CD8-positive, alpha-beta T cell (primary cell): ENCODE measurements at regions of chr22 and their contacts with region 1.

Region 1: DNA sequence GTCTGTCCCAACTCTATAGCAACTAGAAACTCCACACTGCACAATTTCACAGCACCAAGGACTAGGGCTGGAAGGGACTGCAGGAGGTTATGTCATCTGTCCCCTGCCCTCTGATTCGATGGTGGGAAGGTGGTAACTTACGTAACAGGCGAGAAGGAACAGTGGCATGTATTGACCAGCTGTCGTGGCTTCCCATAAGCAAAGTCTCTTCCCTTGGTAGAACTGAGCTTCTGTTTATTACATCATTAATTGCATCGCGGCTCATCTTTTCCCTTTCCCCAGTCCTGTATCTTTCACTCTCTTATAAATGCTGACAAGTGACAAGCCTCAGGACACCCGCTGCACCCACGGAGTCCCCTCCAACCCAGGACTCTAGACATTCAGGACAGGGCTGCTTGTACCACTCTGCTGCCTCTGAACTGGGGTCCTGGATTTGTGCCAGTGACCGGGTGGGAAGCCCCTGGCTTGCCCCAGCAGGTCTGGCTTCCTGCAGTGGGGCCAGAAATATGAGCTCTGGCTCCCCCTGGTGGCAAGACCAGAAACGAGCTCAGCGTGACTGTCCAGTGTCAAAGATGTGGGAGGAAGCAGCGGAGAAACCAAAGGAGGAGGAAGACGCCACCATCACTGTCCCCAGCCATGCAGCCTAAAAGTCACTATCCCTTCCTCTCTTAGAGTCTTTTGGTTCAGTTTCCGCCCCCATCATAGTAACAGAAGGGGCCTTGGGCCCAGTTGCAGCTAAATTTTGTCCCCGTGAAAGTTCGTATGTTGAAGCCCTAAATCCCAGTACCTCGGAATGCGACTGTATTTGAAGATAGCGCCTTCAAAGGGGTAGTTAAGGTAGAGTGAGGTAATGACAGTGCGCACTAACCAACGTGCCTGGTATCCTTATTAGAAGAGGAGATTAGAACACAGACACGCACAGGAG is 84.5 kb downstream of the ISX start:
- DNase-seq: peak; percentile 18 to 67 (median 52)
- ATAC-seq: no peak
- H3K4me3 ChIP-seq: no peak overlapping the region
- H3K4me3 Mint-ChIP-seq: no peak overlapping the region
- H3K27ac ChIP-seq: no peak overlapping the region
- H3K27ac Mint-ChIP-seq: no peak overlapping the region
- H3K4me1 ChIP-seq: no peaks in the 10 kb centered on the region
- H3K4me1 Mint-ChIP-seq: peaks cover 8% of the 10 kb centered on the region
- H3K27me3 ChIP-seq: peaks cover 0 to 2% of the 10 kb centered on the region in 2 experiments
- H3K27me3 Mint-ChIP-seq: peaks cover 34% of the 10 kb centered on the region
- CTCF ChIP-seq: peak; percentile 72

Region 2: GRCh38 chr22:35116817-35117216 is 33.6 kb before region 1 on chr22:
- CTCF ChIA-PET with region 1: interaction called, 12 read pairs
- POLR2A ChIA-PET with region 1: no interaction called
- intact Hi-C with region 1: no loop called
- DNase-seq: no peak
- ATAC-seq: no peak
- H3K4me3 ChIP-seq: no peak overlapping the region
- H3K4me3 Mint-ChIP-seq: no peak overlapping the region
- H3K27ac ChIP-seq: no peak overlapping the region
- H3K27ac Mint-ChIP-seq: no peak overlapping the region
- H3K4me1 ChIP-seq: no peaks in the 10 kb centered on the region
- H3K4me1 Mint-ChIP-seq: no peaks in the 10 kb centered on the region
- H3K27me3 ChIP-seq: no peaks in the 10 kb centered on the region
- H3K27me3 Mint-ChIP-seq: no peaks in the 10 kb centered on the region
- CTCF ChIP-seq: no peak